Activated CD4-positive, alpha-beta memory T cell treated with anti-CD3 and anti-CD28 coated beads for 36 hours (primary cell): ENCODE measurements at regions of chr7 and their contacts with region 1.

Region 1: DNA sequence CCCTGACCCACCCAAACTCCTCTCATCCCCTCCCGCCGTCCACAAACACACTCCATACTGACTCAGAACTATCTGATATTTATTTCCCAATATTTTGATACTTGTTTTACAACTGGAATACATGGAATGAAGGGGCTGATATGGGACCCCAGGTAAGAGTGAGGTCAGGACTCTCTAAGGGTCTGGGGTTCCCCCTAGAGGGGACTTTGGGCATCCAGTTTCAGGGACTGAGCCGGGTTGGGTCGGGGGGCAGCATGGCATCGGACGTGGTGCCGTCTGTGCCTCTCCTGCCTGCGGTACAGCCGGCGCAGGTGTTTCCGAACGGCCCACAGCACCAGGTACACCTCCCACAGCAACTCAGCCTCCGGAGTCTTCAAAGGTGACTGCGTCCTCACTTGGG is 7.5 kb downstream of the SPACDR start:
- DNase-seq: no peak
- H3K4me3 Mint-ChIP-seq: no peak overlapping the region
- H3K27ac Mint-ChIP-seq: no peak overlapping the region
- H3K4me1 Mint-ChIP-seq: peaks cover 16% of the 10 kb centered on the region
- H3K27me3 Mint-ChIP-seq: no peaks in the 10 kb centered on the region

Region 2: DNA sequence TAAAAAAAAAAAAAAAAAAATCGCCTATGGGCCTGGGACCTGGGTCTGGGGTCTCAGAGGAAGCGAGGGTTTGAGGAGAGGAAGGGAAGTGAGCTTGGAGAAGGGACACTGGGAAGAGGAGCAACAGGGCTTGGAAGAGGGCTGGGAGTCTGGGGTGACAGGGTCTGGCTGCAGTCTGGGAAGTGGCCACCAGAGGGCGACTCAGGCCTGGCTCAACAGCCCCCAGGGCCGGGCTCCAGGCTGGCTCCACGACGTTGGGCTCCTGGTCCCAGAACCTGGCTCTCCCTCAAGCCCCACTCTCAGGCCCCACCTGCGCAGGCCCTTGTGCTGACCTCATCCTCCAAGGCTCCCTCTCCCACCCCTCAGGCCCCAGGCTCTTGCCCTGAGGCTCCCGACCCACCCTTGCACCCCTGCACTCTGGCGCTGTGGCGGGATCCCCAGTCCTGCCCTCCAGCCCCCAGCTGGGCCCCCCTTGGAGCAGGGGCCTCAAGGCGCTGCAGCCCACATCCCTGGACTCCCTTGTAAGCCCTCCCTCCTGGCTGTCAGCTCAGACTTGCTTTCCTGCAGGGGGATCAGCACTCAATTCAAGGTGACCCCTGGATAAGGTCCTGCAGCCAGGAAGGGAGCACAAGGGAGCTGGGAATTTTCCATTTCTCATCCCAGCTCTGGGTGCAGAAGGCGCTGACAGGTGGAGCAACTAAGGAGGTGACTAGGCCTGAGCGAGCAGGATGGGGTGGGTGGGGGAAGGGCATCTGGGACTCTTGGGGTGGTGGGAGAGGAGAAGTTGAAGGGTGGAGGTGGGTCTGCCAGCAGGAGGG is 12.9 kb after region 1 on chr7:
- CTCF ChIA-PET with region 1: interaction called, 10 read pairs
- POLR2A ChIA-PET with region 1: no interaction called
- intact Hi-C with region 1: no loop called
- DNase-seq: peak; percentile 88
- H3K4me3 Mint-ChIP-seq: no peak overlapping the region
- H3K27ac Mint-ChIP-seq: peak overlapping the region; percentile 45
- H3K4me1 Mint-ChIP-seq: peaks cover 27% of the 10 kb centered on the region
- H3K27me3 Mint-ChIP-seq: no peaks in the 10 kb centered on the region